Heart left ventricle (tissue), 16 donors: ENCODE measurements at regions of chr5 and their contacts with region 1.

Region 1: GRCh38 chr5:141557681-141558136 is 61.1 kb downstream of the DIAPH1 start:
- DNase-seq: peak; percentile 86 to 93 (median 88)
- ATAC-seq: peak; percentile 81 to 87 (median 85)
- H3K4me3 ChIP-seq: peak overlapping the region in 10 of 12 donors; percentile 10 to 47 (median 36)
- H3K27ac ChIP-seq: peak overlapping the region; percentile 70 to 94 (median 88)
- H3K4me1 ChIP-seq: peaks cover 3 to 44% (median 32%) of the 10 kb centered on the region in 12 donors
- H3K27me3 ChIP-seq: no peaks in the 10 kb centered on the region
- CTCF ChIP-seq: peak; percentile 83 to 92 (median 88)
- POLR2A ChIP-seq: peak in 1 of 2 donors; percentile 39

Region 2: DNA sequence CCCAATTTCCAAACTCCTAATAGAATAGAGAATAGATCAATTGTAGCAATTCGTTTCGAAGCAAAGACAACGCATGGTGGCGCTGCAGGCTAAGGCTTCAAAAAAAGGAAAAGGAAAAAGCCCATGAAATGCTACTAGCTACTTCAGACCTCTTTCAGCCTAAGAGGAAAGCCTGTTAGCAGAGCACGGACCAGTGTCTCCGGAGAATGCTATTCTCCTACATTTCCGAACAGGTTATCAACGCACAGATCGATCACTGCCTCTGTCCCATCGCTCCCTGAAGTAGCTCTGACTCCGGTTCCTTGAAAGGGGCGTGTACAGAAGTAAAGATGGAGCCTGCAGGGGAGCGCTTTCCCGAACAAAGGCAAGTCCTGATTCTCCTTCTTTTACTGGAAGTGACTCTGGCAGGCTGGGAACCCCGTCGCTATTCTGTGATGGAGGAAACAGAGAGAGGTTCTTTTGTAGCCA is 312.4 kb before region 1 on chr5 and contains the start of gene PCDHB15:
- intact Hi-C with region 1: loop called in 7 of 10 experiments (anchors 2 to 10 kb)
- DNase-seq: peak in 2 of 5 donors; percentile 19 to 30
- ATAC-seq: peak; percentile 26 to 60 (median 32)
- H3K4me3 ChIP-seq: peak within 1 kb of the TSS in 11 of 12 donors; percentile 23 to 60 (median 50)
- H3K27ac ChIP-seq: peak within 1 kb of the TSS in 2 of 12 donors; percentile 18 to 62
- H3K4me1 ChIP-seq: peaks cover 0 to 2% (median 0%) of the 10 kb centered on the region in 12 donors
- H3K27me3 ChIP-seq: peaks cover 0 to 19% (median 4%) of the 10 kb centered on the region in 9 donors
- CTCF ChIP-seq: peak in 11 of 12 donors; percentile 18 to 58 (median 45)
- POLR2A ChIP-seq: no peak
- total RNA-seq, gene PCDHB15: 3.7 to 7.5 (median 4.5) TPM

Region 3: DNA sequence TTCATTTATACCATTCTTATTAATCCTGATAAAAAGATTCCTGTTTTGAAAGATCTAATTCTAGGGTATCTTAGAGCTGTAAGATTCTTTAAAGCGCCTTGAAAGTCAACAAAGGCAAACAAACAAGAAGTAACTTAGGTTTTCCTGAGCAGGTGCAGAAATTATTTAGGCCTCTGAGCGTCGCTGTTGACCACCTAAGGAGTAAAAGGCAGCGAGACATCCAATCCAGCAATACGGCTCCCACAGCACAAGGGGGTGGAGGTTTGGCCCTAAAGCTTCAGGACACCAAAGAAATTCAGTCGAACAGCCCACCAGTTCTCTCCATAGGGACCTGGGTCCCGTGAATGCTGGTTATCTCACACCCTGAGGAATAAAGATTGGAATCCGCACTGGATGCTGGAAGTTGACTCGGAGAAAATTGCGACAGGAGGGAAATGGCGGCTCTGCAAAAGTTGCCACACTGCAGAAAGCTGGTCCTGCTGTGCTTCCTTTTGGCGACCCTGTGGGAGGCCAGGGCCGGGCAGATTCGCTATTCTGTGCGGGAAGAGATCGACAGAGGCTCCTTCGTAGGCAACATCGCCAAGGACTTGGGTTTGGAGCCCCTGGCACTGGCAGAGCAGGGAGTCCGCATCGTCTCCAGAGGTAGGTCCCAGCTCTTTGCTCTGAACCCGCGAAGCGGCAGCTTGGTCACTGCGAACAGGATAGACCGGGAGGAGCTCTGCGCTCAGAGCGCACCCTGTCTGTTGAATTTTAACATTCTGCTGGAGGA is 219.0 kb before region 1 on chr5 and contains the start of gene PCDHGA2:
- intact Hi-C with region 1: loop called in 6 of 10 experiments (anchors 2 to 5 kb)
- DNase-seq: peak in 2 of 5 donors; percentile 52 to 54
- ATAC-seq: peak; percentile 66 to 70 (median 69)
- H3K4me3 ChIP-seq: peak within 1 kb of the TSS; percentile 3 to 61 (median 51)
- H3K27ac ChIP-seq: peak within 1 kb of the TSS; percentile 21 to 82 (median 75)
- H3K4me1 ChIP-seq: peaks cover 0 to 7% (median 0%) of the 10 kb centered on the region in 12 donors
- H3K27me3 ChIP-seq: peaks cover 0 to 34% (median 0%) of the 10 kb centered on the region in 9 donors
- CTCF ChIP-seq: peak; percentile 30 to 73 (median 53)
- POLR2A ChIP-seq: no peak
- total RNA-seq, gene PCDHGA2: 5.8 to 15.1 (median 10.7) TPM

Region 4: DNA sequence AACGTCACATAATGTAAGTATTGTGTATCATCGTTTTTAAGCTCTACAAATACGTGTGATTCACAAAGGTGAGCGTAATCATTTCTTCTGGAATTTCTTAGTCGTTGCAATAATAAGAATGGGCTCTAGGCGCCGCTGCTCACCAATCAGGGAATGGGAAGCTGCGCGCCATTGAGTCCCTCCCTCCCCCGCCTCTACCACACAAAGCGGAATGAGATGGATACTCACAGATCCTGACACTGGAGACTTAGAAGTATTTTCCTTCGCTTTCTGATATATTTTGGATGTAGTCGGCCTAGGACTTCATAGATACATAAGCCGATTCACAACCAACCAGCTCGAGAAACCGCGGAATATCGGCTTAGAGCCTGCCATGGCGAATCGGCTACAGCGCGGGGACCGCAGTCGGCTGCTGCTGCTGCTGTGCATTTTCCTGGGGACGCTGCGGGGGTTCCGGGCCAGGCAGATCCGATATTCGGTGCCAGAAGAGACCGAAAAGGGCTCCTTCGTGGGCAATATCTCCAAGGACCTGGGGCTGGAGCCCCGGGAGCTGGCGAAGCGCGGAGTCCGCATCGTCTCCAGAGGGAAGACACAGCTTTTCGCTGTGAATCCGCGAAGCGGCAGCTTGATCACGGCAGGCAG is 136.7 kb before region 1 on chr5 and contains the start of gene PCDHGA11:
- intact Hi-C with region 1: loop called in 9 of 10 experiments (anchors 1 to 10 kb)
- DNase-seq: peak in 3 of 5 donors; percentile 40 to 64 (median 61)
- ATAC-seq: peak in 2 of 4 donors; percentile 52 to 62
- H3K4me3 ChIP-seq: peak within 1 kb of the TSS in 10 of 12 donors; percentile 9 to 45 (median 40)
- H3K27ac ChIP-seq: no peak within 1 kb of the TSS
- H3K4me1 ChIP-seq: peaks cover 0 to 12% (median 1%) of the 10 kb centered on the region in 12 donors
- H3K27me3 ChIP-seq: peaks cover 0 to 76% (median 0%) of the 10 kb centered on the region in 9 donors
- CTCF ChIP-seq: peak; percentile 28 to 57 (median 48)
- POLR2A ChIP-seq: no peak
- total RNA-seq, gene PCDHGA11: 2.8 to 9.0 (median 5.3) TPM

Region 5: GRCh38 chr5:141475625-141476131 is 82.0 kb before region 1 on chr5 and contains the start of gene PCDHGC3:
- intact Hi-C with region 1: loop called in 4 of 10 experiments (anchors 2 to 5 kb)
- DNase-seq: peak; percentile 92 to 96 (median 93)
- ATAC-seq: peak; percentile 98 to 99 (median 99)
- H3K4me3 ChIP-seq: peak within 1 kb of the TSS; percentile 22 to 74 (median 64)
- H3K27ac ChIP-seq: peak within 1 kb of the TSS; percentile 74 to 94 (median 86)
- H3K4me1 ChIP-seq: peaks cover 4 to 50% (median 38%) of the 10 kb centered on the region in 12 donors
- H3K27me3 ChIP-seq: peaks cover 0 to 42% (median 0%) of the 10 kb centered on the region in 9 donors
- CTCF ChIP-seq: peak; percentile 14 to 69 (median 49)
- POLR2A ChIP-seq: peak in 1 of 2 donors; percentile 69
- total RNA-seq, gene PCDHGC3: 12.3 to 32.5 (median 18.4) TPM

Region 6: DNA sequence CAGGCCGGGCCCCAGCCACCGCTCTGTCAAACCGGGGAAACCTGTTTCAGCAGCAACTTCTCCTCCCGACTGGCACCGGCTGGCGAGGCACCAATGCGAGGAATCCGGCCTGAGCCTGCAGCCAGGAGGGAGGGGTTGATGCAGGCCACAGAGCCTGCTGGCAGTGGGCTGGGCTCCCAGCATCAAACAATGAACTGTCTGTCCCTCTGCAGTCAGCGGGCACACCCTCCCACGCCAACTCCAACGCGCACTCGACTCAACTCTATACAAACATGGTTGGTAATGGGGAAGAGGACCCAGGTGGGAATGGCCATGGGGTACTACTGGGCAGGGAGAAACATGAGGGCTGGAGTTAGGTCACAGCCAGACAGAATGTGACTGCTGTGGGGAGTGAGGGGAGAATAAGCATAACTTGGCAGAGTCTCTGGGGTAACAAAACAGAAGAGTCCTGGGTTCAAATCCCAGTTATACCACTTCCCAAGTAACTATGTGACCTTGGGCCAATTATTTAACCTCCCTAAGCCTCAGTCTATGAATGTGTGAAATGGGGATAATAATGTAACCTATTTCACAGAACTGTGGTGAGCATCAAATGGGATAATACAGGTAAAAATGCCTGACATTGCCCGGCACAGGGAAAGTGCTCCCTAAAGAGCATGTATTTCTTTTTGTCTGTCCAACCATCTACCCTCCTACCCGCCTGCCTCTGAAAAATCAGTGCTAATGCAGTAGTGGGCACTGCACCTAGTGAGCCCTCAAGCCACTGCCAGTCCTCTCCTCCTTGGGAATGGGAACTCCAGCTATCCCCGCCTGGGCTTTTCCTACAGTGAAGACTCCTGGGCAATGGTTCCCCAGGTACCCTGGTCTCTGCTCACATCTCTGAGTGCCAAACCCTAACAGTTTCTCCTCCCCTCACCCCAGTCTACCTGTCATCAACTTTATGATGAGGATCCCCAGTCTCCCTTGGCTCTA is 308.7 kb after region 1 on chr5:
- intact Hi-C with region 1: no loop called
- DNase-seq: peak in 1 of 5 donors; percentile 33
- ATAC-seq: peak in 1 of 4 donors; percentile 12
- H3K4me3 ChIP-seq: no peak overlapping the region
- H3K27ac ChIP-seq: no peak overlapping the region
- H3K4me1 ChIP-seq: peaks cover 0 to 37% (median 11%) of the 10 kb centered on the region in 12 donors
- H3K27me3 ChIP-seq: peaks cover 0 to 6% (median 0%) of the 10 kb centered on the region in 9 donors
- CTCF ChIP-seq: no peak
- POLR2A ChIP-seq: no peak